Mucosa of descending colon (tissue), 3 donors: ENCODE measurements at regions of chr6 and their contacts with region 1.

Region 1: DNA sequence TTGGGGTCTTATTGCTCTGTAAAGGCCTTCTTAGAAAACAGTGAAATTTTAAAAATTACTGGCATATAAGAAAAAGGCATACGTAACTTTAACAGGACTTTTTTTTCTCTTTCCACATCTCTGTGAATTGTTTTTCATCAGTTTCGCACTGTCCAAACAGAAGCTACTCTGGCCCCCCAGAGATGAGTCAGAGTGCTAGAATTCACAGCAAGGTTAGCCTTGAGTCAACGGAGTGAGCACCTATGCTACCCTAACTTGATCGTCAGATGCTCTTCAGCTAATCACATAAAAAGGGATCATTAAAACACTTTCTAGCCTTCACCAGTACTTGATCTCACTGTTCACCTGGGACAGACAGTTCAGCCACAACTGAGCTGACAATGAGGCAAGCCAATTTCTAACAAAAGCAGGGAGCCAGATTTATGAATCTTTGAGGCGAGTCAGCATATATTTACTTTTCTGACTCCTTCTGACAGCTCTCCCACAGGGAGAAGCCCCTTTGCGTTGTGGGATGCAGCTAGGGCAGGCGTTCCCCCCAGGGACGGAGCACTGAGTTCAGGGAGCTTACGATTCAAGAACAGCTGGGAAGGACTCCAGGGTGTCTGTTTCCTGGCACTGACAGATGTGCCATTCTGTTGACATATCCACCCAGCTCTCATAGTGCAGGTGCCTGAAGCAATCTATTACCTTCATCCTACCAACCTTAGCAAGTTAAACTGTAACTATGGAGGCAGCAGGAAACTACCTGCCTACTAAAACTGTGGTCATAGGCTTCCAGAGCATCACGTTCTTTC is 46.4 kb upstream of the SPDEF start:
- DNase-seq: peak in 2 of 3 donors; percentile 45 to 67
- ATAC-seq: peak; percentile 97
- H3K4me3 ChIP-seq: no peak overlapping the region
- H3K4me1 ChIP-seq: peaks cover 19% of the 10 kb centered on the region
- CTCF ChIP-seq: no peak

Region 2: DNA sequence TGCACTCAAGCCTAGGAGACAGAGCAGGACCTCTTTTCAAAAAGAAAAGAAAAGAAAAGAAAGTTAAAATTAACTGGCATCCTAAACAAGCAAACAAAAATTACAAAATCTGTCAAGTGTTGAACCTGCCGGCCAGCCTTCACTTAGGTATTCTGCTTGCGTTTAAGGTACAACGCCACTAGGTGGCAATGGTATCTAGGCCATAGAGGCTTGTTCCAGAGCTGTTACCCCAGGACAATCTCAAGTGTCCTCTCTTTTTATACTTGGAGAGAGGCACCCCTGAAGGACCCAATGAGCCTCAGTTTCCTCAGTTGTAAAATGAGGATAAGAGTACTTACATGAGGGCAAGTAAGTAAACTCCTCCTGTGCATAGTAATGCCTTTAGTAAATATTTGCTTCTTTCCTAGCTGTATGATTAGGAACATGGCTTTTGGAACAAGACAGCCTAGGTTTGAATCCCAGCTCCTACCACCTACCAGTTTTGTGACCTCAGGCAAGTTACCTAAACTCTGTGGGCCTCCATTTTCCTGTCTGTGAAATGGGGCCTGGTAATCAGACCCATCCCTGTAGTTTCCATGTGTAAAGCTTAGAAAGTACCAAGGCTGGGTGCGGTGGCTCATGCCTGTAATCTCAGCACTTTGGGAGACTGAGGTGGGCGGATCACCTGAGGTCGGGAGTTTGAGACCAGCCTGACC is 142.5 kb before region 1 on chr6:
- intact Hi-C with region 1: loop called in 1 of 2 experiments (anchors 10 kb)
- DNase-seq: peak in 1 of 3 donors; percentile 76
- ATAC-seq: peak; percentile 78
- H3K4me3 ChIP-seq: no peak overlapping the region
- H3K4me1 ChIP-seq: no peaks in the 10 kb centered on the region
- CTCF ChIP-seq: peak; percentile 15

Region 3: DNA sequence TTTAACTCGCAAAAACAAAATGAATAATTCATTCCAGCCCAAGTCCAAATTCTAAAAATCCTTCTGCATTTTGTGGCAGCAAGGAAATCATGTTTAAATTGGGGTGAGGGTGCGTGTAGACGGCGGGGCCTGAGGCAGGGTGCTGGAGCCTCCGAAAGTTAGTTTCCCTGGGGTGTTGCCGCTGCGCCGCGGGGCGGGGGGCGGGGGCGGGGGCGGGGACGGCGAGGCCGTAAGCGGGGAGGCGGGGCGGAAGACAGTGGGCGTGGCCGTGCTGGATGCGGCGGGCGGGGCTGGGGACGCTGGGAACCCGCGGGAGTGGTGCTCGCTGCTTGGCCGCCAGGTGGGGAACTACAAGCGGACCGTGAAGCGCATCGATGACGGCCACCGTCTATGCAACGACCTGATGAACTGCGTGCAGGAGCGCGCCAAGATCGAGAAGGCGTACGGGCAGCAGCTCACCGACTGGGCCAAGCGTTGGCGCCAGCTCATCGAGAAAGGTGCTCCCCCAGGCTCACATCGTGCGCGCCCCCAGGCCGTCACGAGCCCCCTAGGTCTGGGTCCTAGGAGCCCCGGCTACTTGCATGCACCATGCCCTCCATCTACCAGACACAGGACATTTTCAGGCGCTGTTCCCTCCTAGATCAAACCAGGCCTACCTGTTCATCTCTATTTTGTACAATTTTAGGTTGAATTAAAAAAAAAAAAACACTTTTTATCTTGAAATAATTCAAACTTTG is 75.4 kb before region 1 on chr6:
- intact Hi-C with region 1: loop called in 1 of 2 experiments (anchors 10 kb)
- DNase-seq: peak; percentile 96 to 99 (median 98)
- ATAC-seq: peak; percentile 98
- H3K4me3 ChIP-seq: no peak overlapping the region
- H3K4me1 ChIP-seq: peaks cover 10% of the 10 kb centered on the region
- CTCF ChIP-seq: peak; percentile 72

Region 4: DNA sequence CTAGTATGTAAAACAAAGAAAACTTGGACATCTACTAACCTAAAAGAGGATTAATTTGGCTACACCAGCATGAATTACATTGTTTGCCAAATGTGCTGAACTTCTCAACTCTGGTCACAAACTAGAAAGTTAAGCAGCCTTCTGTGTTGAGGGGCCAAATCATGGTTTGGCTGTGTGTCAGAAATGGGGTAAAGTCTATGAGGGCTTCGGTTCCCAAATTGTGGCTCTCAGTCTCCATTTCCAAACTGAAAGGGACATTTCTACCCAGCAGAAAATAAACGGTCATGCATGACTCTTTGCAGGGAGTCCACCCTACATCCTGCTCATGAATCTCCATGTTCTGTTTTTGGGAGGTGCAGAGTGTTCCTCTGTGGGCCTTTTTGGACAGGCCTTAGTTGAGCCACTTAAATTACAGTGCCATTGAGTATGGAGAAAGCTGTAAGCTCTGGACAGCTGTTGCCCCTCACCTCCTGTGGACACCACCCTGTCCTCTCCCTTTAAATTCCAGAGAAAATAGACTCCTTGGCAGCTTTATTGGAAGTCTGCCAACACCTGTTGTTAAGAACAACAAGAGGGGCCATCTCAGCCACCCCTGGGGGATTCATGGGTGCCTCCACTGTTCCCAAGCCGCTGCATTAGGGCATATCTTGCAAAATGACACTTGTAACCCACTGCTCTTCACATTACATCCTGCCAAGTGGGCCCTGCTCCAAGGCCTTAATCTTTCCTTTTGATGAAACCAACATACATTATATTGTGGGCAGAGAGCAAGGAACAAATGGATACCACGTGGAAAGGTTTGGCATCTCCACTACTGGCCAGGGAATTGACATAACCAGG is 127.3 kb after region 1 on chr6:
- intact Hi-C with region 1: no loop called
- DNase-seq: no peak
- ATAC-seq: no peak
- H3K4me3 ChIP-seq: no peak overlapping the region
- H3K4me1 ChIP-seq: no peaks in the 10 kb centered on the region
- CTCF ChIP-seq: no peak